HCT116 (cell line): ENCODE measurements at regions of chr13 and their contacts with region 1.

Region 1: GRCh38 chr13:110915057-110915873 is at the start of gene ANKRD10:
- DNase-seq: peak; percentile 94
- ATAC-seq: peak; percentile 88
- H3K4me3 ChIP-seq: peak within 1 kb of the TSS; percentile 92 to 95
- H3K27ac ChIP-seq: peak within 1 kb of the TSS; percentile 100
- H3K4me1 ChIP-seq: peaks cover 32 to 52% of the 10 kb centered on the region in 2 experiments
- H3K27me3 ChIP-seq: no peaks in the 10 kb centered on the region
- CTCF ChIP-seq: peak in 2 of 3 experiments; percentile 73 to 80; a peak in 4 of 6 replicates
- POLR2A ChIP-seq: peak; percentile 6
- RAD21 ChIP-seq: no peak
- total RNA-seq, gene ANKRD10: 173 TPM

Region 2: DNA sequence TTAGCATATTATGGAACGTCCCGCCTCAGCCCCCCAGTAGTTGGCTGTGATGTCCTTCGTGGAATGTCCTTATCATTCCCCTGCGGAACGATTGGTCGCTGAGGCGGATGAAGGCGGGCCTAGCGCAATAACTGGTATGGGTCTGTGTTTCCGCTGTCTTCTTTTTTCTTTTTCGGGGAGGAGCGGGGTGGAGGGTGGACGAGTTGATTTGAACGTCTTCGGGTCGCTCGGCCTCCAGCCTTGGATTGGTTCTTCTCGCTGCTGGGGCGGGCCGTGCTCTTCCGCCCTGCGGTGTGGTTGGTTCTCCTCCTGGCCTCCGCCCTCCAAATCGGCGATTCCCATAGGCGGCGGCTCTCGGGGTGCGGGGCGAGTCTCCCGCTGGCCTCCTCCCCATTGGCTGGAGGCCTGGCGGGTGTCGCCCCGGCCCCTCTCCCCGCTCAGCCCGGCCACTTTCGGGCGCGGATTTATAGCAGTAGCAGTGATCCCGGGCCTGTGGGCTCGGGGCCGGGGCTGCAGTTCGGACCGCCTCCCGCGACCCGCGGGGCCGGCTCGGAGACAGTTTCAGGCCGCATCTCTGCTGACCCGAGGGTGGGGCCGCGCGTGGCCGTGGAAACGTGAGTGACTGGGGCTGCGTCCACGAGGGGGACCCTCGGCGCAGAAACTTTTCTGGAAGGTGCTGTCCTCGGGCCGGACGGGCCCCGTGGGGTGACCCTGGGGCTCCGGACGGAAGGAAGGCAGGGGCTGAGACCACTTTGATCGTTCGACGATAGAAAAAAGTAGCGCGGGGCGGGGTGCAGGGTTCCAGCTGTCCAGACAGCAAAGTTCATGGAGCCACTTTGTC is 199.7 kb before region 1 on chr13:
- CTCF ChIA-PET with region 1: no interaction called
- POLR2A ChIA-PET with region 1: interaction called, 10 read pairs
- RAD21 ChIA-PET with region 1: no interaction called
- intact Hi-C with region 1: loop called (anchors 2 kb)
- DNase-seq: peak; percentile 99
- ATAC-seq: peak; percentile 73
- H3K4me3 ChIP-seq: peak overlapping the region; percentile 88 to 93
- H3K27ac ChIP-seq: peak overlapping the region; percentile 73
- H3K4me1 ChIP-seq: peaks cover 15 to 32% of the 10 kb centered on the region in 2 experiments; a peak in 3 of 4 replicates
- H3K27me3 ChIP-seq: no peaks in the 10 kb centered on the region
- CTCF ChIP-seq: 0 out of 6 replicates have a peak, but pooled peaks of 1 of the 3 experiments have one; percentile 18
- POLR2A ChIP-seq: no peak
- RAD21 ChIP-seq: no peak

Region 3: DNA sequence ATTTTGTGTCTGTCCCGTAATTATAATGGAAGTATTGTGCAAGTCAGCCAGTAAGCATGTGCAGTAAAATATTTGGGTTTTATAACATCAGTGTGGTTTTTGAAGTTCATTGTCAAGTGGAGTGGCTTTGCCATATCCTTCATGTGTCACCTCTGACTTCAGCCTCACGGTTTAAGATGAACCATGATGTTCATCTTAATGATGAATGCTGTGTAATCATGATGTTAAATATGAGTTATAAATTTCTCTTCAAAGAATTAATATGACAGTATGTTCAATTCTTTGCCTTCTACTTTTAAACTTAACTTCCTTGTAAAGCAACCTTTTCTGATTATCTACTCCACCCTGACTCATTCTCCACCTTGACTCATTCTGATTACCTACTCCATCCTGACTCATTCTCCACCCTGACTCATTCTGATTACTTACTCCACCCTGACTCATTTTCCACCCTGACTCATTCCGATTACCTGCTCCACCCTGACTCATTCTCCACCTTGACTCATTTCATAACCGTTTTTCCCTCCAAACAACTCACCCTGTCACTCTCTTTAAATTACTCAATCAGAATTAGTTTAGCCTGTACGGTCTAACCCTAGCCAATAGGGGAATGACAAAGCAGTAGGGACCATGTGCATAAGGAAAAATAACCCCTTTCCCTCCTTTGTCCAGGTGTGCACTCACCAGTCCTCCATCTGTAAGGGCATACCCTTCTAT is 49.9 kb after region 1 on chr13:
- CTCF ChIA-PET with region 1: no interaction called
- POLR2A ChIA-PET with region 1: no interaction called
- RAD21 ChIA-PET with region 1: no interaction called
- intact Hi-C with region 1: loop called (anchors 2 kb)
- DNase-seq: peak; percentile 99
- ATAC-seq: peak; percentile 86
- H3K4me3 ChIP-seq: peak overlapping the region in 1 of 2 experiments; percentile 27; a peak in 2 of 4 replicates
- H3K27ac ChIP-seq: peak overlapping the region; percentile 99
- H3K4me1 ChIP-seq: peaks cover 43 to 95% of the 10 kb centered on the region in 2 experiments
- H3K27me3 ChIP-seq: no peaks in the 10 kb centered on the region
- CTCF ChIP-seq: no peak
- POLR2A ChIP-seq: no peak
- RAD21 ChIP-seq: no peak

Region 4: DNA sequence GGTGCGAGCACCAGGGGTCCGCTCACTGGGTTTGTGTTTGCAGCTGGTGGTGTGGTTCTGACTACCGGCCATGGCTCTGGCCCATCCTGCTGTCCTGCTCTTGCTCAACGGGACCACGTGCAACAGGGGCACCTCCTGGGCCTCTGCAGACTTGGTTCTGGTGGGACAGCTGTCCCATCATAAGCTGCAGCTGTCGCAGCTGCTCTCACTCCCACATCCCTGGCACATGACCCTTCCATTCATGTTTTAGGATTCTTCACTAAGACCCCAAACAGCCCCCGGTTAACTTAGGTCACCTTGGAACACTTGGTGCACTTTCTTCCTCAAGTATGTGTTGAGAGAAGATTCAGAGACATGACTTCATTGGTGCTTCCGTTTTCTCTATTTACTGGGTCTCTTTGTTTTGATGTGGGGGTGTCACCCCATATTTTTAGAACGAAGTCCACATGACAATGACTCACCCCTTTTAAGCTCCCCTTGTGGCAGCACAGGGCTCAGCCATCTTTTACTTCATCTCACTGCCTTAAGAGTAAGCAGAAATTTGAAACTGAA is 131.4 kb after region 1 on chr13:
- CTCF ChIA-PET with region 1: no interaction called
- POLR2A ChIA-PET with region 1: no interaction called
- RAD21 ChIA-PET with region 1: no interaction called
- intact Hi-C with region 1: loop called (anchors 10 kb)
- DNase-seq: no peak
- ATAC-seq: no peak
- H3K4me3 ChIP-seq: no peak overlapping the region
- H3K27ac ChIP-seq: no peak overlapping the region
- H3K4me1 ChIP-seq: peaks cover 0 to 29% of the 10 kb centered on the region in 2 experiments; a peak in 2 of 4 replicates
- H3K27me3 ChIP-seq: no peaks in the 10 kb centered on the region
- CTCF ChIP-seq: peak in 1 of 3 experiments; percentile 32; a peak in 3 of 6 replicates
- POLR2A ChIP-seq: no peak
- RAD21 ChIP-seq: no peak

Region 5: GRCh38 chr13:111066544-111066943 is 151.3 kb after region 1 on chr13:
- CTCF ChIA-PET with region 1: interaction called, 15 read pairs
- POLR2A ChIA-PET with region 1: no interaction called
- RAD21 ChIA-PET with region 1: no interaction called
- intact Hi-C with region 1: no loop called
- DNase-seq: no peak
- ATAC-seq: no peak
- H3K4me3 ChIP-seq: no peak overlapping the region
- H3K27ac ChIP-seq: no peak overlapping the region
- H3K4me1 ChIP-seq: peaks cover 3 to 14% of the 10 kb centered on the region in 2 experiments; a peak in 1 of 4 replicates
- H3K27me3 ChIP-seq: no peaks in the 10 kb centered on the region
- CTCF ChIP-seq: no peak
- POLR2A ChIP-seq: no peak
- RAD21 ChIP-seq: no peak

Region 6: GRCh38 chr13:112066624-112067004 is 1151.3 kb after region 1 on chr13:
- CTCF ChIA-PET with region 1: no interaction called
- POLR2A ChIA-PET with region 1: no interaction called
- RAD21 ChIA-PET with region 1: no interaction called
- intact Hi-C with region 1: no loop called
- DNase-seq: no peak
- ATAC-seq: no peak
- H3K4me3 ChIP-seq: no peak overlapping the region
- H3K27ac ChIP-seq: no peak overlapping the region
- H3K4me1 ChIP-seq: no peaks in the 10 kb centered on the region
- H3K27me3 ChIP-seq: peaks cover 6% of the 10 kb centered on the region; the same call in 1 of the 2 replicates
- CTCF ChIP-seq: no peak
- POLR2A ChIP-seq: no peak
- RAD21 ChIP-seq: no peak